Testis (tissue), 5 donors: ENCODE measurements at regions of chr4 and their contacts with region 1.

Region 1: DNA sequence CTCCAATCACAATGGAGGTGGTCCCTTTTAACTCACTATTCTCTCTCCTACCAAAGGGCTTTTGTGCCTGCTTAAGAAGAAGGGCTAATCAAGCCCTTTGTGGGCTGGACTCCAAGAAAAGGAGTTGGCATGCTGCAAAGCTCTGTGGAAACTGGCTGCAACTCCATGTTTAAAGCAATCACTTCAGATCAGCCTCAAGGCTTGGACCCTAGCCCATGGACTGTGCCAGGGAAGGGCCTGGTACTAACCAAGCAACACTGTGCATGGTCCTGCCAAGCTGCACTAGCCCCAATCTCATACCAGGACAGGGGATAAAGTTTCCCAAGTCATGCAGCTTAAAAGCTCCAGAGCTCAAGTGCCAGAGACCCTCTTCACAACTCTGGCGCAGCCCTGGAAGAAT is 86.7 kb downstream of the ATP8A1 start:
- DNase-seq: no peak
- H3K4me3 ChIP-seq: no peak overlapping the region
- H3K27ac ChIP-seq: no peak overlapping the region
- H3K4me1 ChIP-seq: no peaks in the 10 kb centered on the region
- H3K27me3 ChIP-seq: no peaks in the 10 kb centered on the region
- CTCF ChIP-seq: no peak
- POLR2A ChIP-seq: no peak

Region 2: GRCh38 chr4:42865572-42866189 is 295.5 kb after region 1 on chr4:
- intact Hi-C with region 1: loop called (anchors 10 kb)
- DNase-seq: peak; percentile 78
- H3K4me3 ChIP-seq: no peak overlapping the region
- H3K27ac ChIP-seq: no peak overlapping the region
- H3K4me1 ChIP-seq: no peaks in the 10 kb centered on the region
- H3K27me3 ChIP-seq: no peaks in the 10 kb centered on the region
- CTCF ChIP-seq: peak; percentile 46 to 89 (median 56)
- POLR2A ChIP-seq: no peak